GM12878 (cell line): ENCODE measurements at regions of chr1 and their contacts with region 1.

Region 1: DNA sequence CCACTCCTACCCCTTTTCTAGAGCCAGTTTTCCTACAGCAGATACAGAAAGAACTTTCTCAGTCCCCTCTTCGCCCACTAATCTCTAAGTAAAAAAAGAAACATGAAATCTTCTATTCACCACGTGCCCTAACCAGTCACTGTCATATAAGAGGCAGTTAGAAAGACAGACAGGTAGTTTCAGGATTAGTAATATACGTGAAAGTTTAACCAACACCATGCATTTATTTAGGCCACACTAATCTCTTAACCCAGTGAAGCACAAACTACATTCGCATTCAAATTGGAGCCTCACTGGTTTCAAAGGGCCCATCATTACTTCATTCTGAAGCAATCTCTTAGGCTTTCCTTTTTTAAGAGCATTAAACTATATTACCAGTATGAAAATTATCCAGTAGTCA is 10.1 kb downstream of the GPATCH2 start:
- DNase-seq: peak; percentile 64
- ATAC-seq: peak; percentile 99
- H3K4me3 ChIP-seq: 0 out of 2 replicates have a peak overlapping the region, but pooled peaks have one; percentile 23
- H3K27ac ChIP-seq: peak overlapping the region; percentile 48; the same call in 1 of the 2 replicates
- H3K4me1 ChIP-seq: peaks cover 18% of the 10 kb centered on the region
- H3K27me3 ChIP-seq: no peaks in the 10 kb centered on the region
- CTCF ChIP-seq: no peak
- EP300 ChIP-seq: peak; percentile 59 to 74; a peak in 3 of 4 replicates
- POLR2A ChIP-seq: no peak
- RAD21 ChIP-seq: peak; percentile 1; the same call in 1 of the 2 replicates

Region 2: GRCh38 chr1:217482356-217483102 is 138.3 kb before region 1 on chr1:
- CTCF ChIA-PET with region 1: no interaction called
- POLR2A ChIA-PET with region 1: no interaction called
- RAD21 ChIA-PET with region 1: no interaction called
- SMC1A ChIA-PET with region 1: no interaction called
- in situ Hi-C with region 1: no loop called
- intact Hi-C with region 1: loop called (anchors 5 kb)
- DNase-seq: peak; percentile 38
- ATAC-seq: peak; percentile 98
- H3K4me3 ChIP-seq: no peak overlapping the region
- H3K27ac ChIP-seq: no peak overlapping the region
- H3K4me1 ChIP-seq: peaks cover 6% of the 10 kb centered on the region; the same call in 1 of the 2 replicates
- H3K27me3 ChIP-seq: no peaks in the 10 kb centered on the region
- CTCF ChIP-seq: no peak
- EP300 ChIP-seq: no peak
- POLR2A ChIP-seq: no peak
- RAD21 ChIP-seq: no peak

Region 3: DNA sequence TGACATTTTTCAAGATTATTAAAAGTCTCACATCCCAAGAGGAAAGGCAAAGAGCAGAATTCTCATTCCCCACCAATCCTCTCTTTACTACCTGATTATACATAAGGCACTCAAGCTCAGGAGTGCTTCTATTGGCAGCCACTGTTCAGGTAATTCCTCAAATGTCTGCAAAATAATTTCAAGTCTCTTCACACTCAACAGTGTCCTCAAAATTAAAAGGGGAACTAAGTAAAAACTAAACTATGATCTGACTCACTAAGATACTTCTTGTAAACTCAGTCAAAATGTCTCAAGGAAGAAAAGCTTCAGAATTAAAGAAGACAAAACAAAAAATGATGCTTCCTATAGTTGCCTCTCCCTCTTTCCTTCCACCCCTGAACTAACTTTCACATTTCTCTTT is 125.6 kb before region 1 on chr1:
- CTCF ChIA-PET with region 1: no interaction called
- POLR2A ChIA-PET with region 1: no interaction called
- RAD21 ChIA-PET with region 1: no interaction called
- SMC1A ChIA-PET with region 1: no interaction called
- in situ Hi-C with region 1: no loop called
- intact Hi-C with region 1: loop called (anchors 2 kb)
- DNase-seq: peak; percentile 23
- ATAC-seq: peak; percentile 96
- H3K4me3 ChIP-seq: no peak overlapping the region
- H3K27ac ChIP-seq: no peak overlapping the region
- H3K4me1 ChIP-seq: peaks cover 9% of the 10 kb centered on the region
- H3K27me3 ChIP-seq: no peaks in the 10 kb centered on the region
- CTCF ChIP-seq: no peak
- EP300 ChIP-seq: peak; percentile 10 to 39; a peak in 1 of 4 replicates
- POLR2A ChIP-seq: no peak
- RAD21 ChIP-seq: no peak

Region 4: GRCh38 chr1:217554849-217555248 is 66.0 kb before region 1 on chr1:
- CTCF ChIA-PET with region 1: no interaction called
- POLR2A ChIA-PET with region 1: no interaction called
- RAD21 ChIA-PET with region 1: no interaction called
- SMC1A ChIA-PET with region 1: no interaction called
- in situ Hi-C with region 1: no loop called
- intact Hi-C with region 1: no loop called
- DNase-seq: no peak
- ATAC-seq: no peak
- H3K4me3 ChIP-seq: no peak overlapping the region
- H3K27ac ChIP-seq: no peak overlapping the region
- H3K4me1 ChIP-seq: no peaks in the 10 kb centered on the region
- H3K27me3 ChIP-seq: no peaks in the 10 kb centered on the region
- CTCF ChIP-seq: no peak
- EP300 ChIP-seq: no peak
- POLR2A ChIP-seq: no peak
- RAD21 ChIP-seq: no peak

Region 5: DNA sequence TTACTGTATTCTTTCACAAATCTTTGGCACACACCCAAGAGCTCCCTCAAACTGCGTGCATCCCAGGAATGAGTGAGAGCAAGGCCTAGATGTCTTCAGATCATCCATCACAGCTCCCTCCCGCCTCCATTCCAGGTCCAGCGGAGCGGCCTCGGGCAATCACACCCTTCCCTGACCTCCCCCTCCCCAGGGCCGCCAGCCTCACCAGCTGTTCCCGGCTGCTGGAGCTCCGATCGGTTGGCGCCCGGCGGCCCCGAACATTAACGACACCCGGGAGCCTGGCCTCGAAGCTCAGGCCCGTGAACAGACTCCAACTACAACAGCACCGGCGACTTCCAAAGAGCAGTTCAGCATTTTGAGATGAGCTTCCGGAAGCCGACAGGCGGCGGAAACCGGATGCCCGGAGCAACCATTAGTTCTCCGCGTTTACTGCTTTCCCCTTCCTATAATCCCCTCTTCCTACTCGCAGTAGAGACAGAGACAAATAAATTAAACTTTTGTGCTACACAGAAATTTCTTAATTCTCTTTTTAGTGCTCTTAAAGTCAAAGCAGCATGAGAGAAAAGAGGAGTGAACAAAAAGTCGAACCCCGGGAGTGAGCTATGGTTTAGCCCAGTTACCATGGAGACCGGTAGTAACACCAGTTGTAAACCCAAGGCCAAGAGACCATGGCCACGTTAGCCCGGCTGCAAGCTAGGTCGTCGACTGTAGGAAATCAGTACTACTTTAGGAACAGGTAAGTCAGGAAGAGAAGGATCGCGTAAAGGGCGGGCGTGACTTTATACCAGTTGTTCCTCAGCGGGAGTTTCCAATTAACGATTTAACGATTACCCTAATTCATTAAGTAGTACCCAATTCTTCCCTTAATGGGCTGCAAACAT is 10.1 kb after region 1 on chr1 and contains the starts of genes GPATCH2 and SPATA17:
- CTCF ChIA-PET with region 1: interaction called, 11 read pairs
- POLR2A ChIA-PET with region 1: interaction called, 12 read pairs
- RAD21 ChIA-PET with region 1: interaction called, 6 read pairs
- SMC1A ChIA-PET with region 1: interaction called, 15 read pairs
- in situ Hi-C with region 1: no loop called
- intact Hi-C with region 1: no loop called
- DNase-seq: peak; percentile 77
- ATAC-seq: peak; percentile 95
- H3K4me3 ChIP-seq: peak within 1 kb of the TSS; percentile 84
- H3K27ac ChIP-seq: peak within 1 kb of the TSS; percentile 94
- H3K4me1 ChIP-seq: peaks cover 4% of the 10 kb centered on the region; the same call in 1 of the 2 replicates
- H3K27me3 ChIP-seq: no peaks in the 10 kb centered on the region; a peak in 1 of 4 replicates
- CTCF ChIP-seq: 0 out of 6 replicates have a peak, but pooled peaks of 2 of the 3 experiments have one; percentile 6 to 16
- EP300 ChIP-seq: 0 out of 4 replicates have a peak, but pooled peaks of 1 of the 2 experiments have one; percentile 9
- POLR2A ChIP-seq: peak; percentile 90
- RAD21 ChIP-seq: no peak
- polyA plus RNA-seq, gene GPATCH2: 3.2 to 4.8 TPM
- polyA plus RNA-seq, gene SPATA17: 0.08 TPM in 1 of 2 experiments, not detected in the other